ENCODE measurements at regions of chr1 and their contacts with region 1.

Region 1: GRCh38 chr1:156160743-156161171 is 7.4 kb downstream of the SEMA4A start:
- DNase-seq: peak; percentile 90
- H3K4me3 Mint-ChIP-seq: peak overlapping the region; percentile 74
- H3K27ac Mint-ChIP-seq: peak overlapping the region; percentile 93
- H3K4me1 Mint-ChIP-seq: peaks cover 82% of the 10 kb centered on the region
- H3K27me3 Mint-ChIP-seq: no peaks in the 10 kb centered on the region

Region 2: DNA sequence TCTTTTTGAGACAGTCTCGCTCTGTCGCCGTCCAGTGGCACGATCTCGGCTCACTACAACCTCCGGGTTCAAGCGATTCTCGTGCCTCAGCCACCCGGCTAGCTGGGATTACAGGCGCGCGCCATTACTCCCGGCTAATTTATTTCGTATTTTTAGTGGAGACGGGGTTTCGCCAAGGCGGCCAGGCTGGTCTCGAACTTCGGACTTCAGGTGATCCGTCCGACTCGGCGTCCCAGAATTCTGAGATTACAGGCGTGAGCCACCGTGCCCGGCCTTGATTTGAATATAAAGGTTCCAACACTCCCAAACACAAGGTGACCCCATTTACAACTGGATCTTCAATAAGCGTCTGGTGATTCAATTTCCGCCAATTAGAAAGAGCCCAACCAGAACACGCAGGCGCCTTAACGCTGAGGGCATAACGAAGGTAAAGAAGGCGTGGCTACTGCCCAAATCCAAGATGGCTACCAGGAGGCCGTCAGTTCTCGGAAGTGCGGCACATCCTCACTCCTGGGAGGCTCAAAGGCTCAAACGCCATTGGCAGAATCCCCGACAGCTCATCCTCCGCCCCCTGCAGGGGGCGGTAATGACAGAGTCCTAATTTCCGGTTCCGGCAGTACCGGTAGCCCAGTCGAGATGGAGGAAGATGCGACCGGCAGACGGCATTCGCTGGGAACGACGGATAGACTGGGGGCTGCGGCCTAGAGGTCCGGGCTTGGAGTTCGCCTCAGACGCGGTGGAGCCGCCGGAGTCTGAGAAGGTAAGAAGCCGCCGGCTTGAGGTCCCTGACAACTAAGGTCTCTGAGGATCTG is 32.9 kb after region 1 on chr1 and contains the start of gene SLC25A44:
- CTCF ChIA-PET with region 1: interaction called, 3 read pairs
- POLR2A ChIA-PET with region 1: interaction called, 16 read pairs
- intact Hi-C with region 1: loop called (anchors 1 kb)
- DNase-seq: peak; percentile 99
- H3K4me3 Mint-ChIP-seq: peak within 1 kb of the TSS; percentile 100
- H3K27ac Mint-ChIP-seq: peak within 1 kb of the TSS; percentile 81
- H3K4me1 Mint-ChIP-seq: peaks cover 61% of the 10 kb centered on the region
- H3K27me3 Mint-ChIP-seq: no peaks in the 10 kb centered on the region
- total RNA-seq, gene SLC25A44: 61.3 to 62.2 TPM

Region 3: GRCh38 chr1:156198831-156199349 is 38.1 kb after region 1 on chr1:
- CTCF ChIA-PET with region 1: interaction called, 3 read pairs
- POLR2A ChIA-PET with region 1: interaction called, 16 read pairs
- intact Hi-C with region 1: loop called (anchors 2 kb)
- DNase-seq: peak; percentile 73
- H3K4me3 Mint-ChIP-seq: no peak overlapping the region
- H3K27ac Mint-ChIP-seq: no peak overlapping the region
- H3K4me1 Mint-ChIP-seq: peaks cover 64% of the 10 kb centered on the region
- H3K27me3 Mint-ChIP-seq: no peaks in the 10 kb centered on the region

Region 4: DNA sequence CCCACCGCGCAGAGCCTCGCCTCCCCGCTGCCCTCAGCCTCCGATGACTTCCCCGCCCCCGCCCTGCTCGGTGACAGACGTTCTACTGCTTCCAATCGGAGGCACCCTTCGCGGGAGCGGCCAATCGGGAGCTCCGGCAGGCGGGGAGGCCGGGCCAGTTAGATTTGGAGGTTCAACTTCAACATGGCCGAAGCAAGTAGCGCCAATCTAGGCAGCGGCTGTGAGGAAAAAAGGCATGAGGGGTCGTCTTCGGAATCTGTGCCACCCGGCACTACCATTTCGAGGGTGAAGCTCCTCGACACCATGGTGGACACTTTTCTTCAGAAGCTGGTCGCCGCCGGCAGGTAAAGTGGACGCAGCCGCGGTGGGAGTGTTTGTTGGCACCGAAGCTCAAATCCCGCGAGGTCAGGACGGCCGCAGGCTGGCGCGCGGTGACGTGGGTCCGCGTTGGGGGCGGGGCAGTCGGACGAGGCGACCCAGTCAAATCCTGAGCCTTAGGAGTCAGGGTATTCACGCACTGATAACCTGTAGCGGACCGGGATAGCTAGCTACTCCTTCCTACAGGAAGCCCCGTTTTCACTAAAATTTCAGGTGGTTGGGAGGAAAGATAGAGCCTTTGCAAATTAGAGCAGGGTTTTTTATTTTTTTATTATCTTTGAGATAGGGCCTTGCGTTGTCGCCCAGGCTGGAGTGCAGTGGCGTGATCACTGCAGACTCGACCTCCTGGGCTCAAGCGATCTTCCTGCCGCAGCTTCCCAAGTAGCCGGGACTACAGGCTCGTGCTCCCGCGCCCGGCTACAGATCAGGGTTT is 52.3 kb after region 1 on chr1 and contains the start of gene PMF1:
- CTCF ChIA-PET with region 1: interaction called, 5 read pairs
- POLR2A ChIA-PET with region 1: interaction called, 40 read pairs
- intact Hi-C with region 1: loop called (anchors 1 kb)
- DNase-seq: peak; percentile 98
- H3K4me3 Mint-ChIP-seq: peak within 1 kb of the TSS; percentile 76
- H3K27ac Mint-ChIP-seq: peak within 1 kb of the TSS; percentile 96
- H3K4me1 Mint-ChIP-seq: peaks cover 40% of the 10 kb centered on the region
- H3K27me3 Mint-ChIP-seq: no peaks in the 10 kb centered on the region
- total RNA-seq, gene PMF1: 99.5 to 105 TPM

Region 5: DNA sequence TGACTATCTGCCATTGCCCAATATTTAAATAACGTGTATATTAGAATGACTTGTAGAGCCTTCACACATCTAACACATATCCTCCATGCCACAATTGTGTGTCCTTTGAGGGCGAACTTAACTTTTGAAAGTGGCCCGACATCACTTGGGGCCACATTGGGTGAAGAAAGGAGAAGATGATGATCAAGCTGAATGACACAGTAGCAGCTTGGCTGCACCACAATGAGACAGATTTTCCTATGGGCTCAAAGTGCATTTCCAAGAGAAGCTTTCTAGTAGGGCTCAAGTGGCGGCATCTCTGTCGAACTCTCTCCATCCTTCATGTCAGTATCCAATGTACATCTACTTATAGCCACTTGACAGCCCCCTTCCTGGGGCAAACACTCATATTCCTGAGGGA is 77.5 kb after region 1 on chr1:
- CTCF ChIA-PET with region 1: no interaction called
- POLR2A ChIA-PET with region 1: no interaction called
- intact Hi-C with region 1: no loop called
- DNase-seq: no peak
- H3K4me3 Mint-ChIP-seq: no peak overlapping the region
- H3K27ac Mint-ChIP-seq: no peak overlapping the region
- H3K4me1 Mint-ChIP-seq: peaks cover 5% of the 10 kb centered on the region
- H3K27me3 Mint-ChIP-seq: no peaks in the 10 kb centered on the region

Region 6: GRCh38 chr1:156259805-156260204 is 99.0 kb after region 1 on chr1:
- CTCF ChIA-PET with region 1: no interaction called
- POLR2A ChIA-PET with region 1: no interaction called
- intact Hi-C with region 1: no loop called
- DNase-seq: no peak
- H3K4me3 Mint-ChIP-seq: no peak overlapping the region
- H3K27ac Mint-ChIP-seq: peak overlapping the region; percentile 13
- H3K4me1 Mint-ChIP-seq: peaks cover 4% of the 10 kb centered on the region
- H3K27me3 Mint-ChIP-seq: no peaks in the 10 kb centered on the region